GM10248 (cell line): ENCODE measurements at regions of chr6 and their contacts with region 1.

Region 1: DNA sequence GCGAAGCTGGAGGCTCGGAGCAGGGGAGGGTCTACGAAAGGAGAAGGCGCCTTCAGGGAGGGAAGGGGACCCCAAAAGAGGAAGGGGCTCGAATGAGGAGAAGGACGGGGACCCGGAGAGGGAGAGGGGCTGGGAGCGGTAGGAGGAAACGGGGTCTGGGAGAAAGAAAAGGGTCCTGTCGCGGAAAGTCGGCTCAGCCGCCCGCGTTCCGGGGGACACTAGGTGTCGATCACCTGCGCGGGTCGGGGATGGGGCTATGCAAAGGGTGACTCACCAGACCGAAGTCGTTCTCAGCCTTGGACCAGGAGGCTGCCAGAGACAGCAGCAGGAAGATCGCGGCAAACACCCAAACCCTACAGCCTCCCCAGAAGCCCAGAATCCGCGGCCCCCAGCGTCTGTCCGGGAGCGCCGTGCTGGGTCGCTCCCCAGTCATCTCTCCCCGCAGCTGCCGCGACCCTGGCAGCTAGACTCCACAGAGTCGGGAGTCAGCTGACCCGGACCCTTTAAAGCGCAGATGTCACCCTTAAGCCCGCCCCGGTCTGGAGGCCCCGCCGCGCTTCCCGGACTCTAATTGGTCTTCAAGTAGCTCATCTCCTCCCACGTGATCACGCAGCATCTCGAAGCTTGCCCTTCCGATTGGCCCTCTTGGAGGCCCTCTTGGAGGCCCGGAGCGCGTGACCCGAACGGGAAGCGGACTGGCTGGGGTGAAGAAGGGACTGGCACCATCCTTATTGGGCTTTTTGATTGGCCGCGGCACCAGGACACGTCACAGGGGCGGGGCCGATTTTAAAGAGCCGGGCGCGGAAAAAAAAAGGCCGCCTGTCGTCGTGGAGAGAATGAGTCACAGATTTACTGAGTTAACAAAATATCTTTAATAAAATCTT is at the start of gene NEU1:
- DNase-seq: peak; percentile 100
- CTCF ChIP-seq: no peak

Region 2: GRCh38 chr6:31763619-31763940 is 99.0 kb before region 1 on chr6:
- CTCF ChIA-PET with region 1: no interaction called
- POLR2A ChIA-PET with region 1: no interaction called
- DNase-seq: no peak
- CTCF ChIP-seq: no peak

Region 3: DNA sequence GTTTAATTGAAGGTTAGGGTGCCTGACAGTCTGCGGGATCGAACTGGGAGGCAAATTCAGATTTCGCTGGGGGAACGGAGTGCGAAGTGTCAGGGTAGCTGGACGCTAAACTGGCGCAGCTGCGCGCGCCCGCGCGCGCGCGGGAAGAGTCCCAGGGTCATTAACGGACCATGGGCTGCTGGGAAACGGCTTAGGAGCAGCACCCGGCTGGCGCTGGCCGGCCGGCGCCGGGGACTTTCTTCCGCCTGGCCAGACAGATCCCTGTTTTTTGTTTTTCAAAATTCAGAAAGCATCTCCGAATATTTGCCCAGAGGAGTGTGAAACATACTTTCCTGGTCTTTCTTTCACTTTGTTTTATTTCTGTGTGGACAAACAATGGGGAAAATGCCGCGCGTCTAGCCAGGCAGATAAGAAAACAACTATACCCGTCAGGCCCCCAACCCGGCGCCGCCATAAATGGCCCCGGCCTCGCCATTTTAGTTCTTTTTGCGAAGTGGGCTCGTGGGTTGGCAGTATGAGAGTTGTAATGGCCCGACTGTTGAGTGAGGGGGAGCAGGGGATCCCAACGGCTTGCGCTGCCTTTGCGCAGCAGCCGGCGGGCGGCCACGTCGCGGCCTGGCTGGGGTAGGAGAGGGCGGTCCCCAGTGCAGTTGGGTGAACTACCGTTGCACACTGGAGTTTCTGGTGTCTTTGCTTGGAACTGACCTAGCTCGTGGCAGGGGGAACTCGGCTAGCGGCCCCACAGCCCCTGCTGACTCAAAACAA is 28.0 kb before region 1 on chr6:
- CTCF ChIA-PET with region 1: interaction called, 3 read pairs
- POLR2A ChIA-PET with region 1: interaction called, 30 read pairs
- DNase-seq: peak; percentile 86
- CTCF ChIP-seq: no peak

Region 4: DNA sequence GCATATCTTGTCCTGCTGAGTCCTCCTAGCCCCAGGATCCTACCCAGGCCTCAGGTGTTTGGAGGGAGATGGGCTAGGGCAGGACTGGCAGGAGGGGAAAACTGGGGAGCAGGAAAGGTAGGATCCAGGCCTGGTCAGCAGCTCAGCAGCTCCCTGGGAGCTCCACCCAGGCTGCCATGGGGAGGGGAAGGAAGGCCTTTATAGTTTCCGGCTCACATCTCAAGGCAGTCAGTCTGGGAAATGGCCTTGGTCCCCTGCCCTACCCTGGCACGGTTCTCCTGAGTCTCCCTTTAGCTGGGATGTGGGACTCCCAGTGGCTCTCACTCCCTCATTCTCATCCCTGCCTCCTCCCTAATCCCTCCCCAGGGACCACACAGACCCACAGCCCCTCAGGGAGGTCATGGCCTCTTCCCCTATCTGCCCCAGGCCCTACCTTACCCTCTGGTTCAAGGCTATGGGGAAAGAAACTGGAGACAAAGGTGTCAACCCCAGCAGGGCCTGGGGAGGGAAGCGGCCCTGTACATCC is 14.6 kb after region 1 on chr6:
- CTCF ChIA-PET with region 1: interaction called, 11 read pairs
- POLR2A ChIA-PET with region 1: interaction called, 6 read pairs
- DNase-seq: no peak
- CTCF ChIP-seq: no peak